GM12878 (cell line): ENCODE measurements at regions of chr20 and their contacts with region 1.

Region 1: DNA sequence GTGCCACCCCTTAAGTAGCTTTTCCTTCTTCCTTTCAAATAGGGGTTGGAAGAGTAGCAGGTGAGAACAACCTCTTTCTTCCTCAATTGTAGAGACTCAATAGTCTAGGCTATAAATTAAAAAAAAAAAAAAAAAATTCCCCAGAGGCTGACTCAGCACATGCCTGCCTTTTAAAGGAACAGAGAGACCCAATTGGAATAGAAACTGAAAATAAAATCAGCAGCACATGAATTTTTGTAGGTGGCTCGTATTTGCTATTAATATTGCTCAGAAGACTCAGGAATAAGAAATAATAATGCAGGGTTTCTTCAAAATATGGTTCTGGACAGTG is 19.3 kb downstream of the TOP1 start:
- DNase-seq: no peak
- ATAC-seq: peak; percentile 69
- H3K4me3 ChIP-seq: peak overlapping the region; percentile 64
- H3K27ac ChIP-seq: peak overlapping the region; percentile 76
- H3K4me1 ChIP-seq: peaks cover 44% of the 10 kb centered on the region
- H3K27me3 ChIP-seq: no peaks in the 10 kb centered on the region
- CTCF ChIP-seq: no peak
- EP300 ChIP-seq: no peak
- POLR2A ChIP-seq: no peak
- RAD21 ChIP-seq: no peak

Region 2: DNA sequence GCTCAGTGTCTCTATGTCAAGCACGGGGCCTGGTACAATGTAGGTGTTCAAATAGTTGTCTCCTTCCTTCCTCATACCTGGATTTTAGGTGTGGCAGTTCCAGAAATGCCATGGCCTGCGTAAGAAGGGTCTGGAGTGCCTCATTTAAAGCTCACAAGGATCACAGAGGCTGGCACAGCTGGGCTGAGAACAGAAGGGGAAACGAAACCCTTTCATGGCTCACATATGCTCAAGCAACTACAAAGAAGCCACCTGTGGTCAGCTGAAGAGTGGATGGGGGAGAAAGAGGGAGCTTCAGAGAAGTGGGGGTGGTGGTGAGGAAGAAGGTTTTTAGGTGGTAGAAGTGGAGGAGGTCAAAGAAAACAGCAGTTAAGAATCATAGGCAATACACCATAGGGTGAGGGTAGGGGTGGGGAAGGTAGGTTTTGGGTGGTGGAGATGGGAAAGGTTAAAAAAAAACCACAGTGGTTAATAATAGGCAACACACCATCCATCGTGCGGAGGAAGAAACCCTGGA is 36.3 kb before region 1 on chr20:
- CTCF ChIA-PET with region 1: interaction called, 6 read pairs
- POLR2A ChIA-PET with region 1: interaction called, 12 read pairs
- RAD21 ChIA-PET with region 1: interaction called, 33 read pairs
- SMC1A ChIA-PET with region 1: interaction called, 43 read pairs
- in situ Hi-C with region 1: no loop called
- intact Hi-C with region 1: no loop called
- DNase-seq: peak; percentile 95
- ATAC-seq: peak; percentile 95
- H3K4me3 ChIP-seq: peak overlapping the region; percentile 38
- H3K27ac ChIP-seq: peak overlapping the region; percentile 91
- H3K4me1 ChIP-seq: peaks cover 44% of the 10 kb centered on the region
- H3K27me3 ChIP-seq: no peaks in the 10 kb centered on the region
- CTCF ChIP-seq: no peak
- EP300 ChIP-seq: peak; percentile 83 to 88
- POLR2A ChIP-seq: no peak
- RAD21 ChIP-seq: peak; percentile 30; the same call in 1 of the 2 replicates

Region 3: GRCh38 chr20:41057999-41058896 is 10.3 kb after region 1 on chr20:
- CTCF ChIA-PET with region 1: interaction called, 53 read pairs
- POLR2A ChIA-PET with region 1: interaction called, 66 read pairs
- RAD21 ChIA-PET with region 1: interaction called, 16 read pairs
- SMC1A ChIA-PET with region 1: interaction called, 86 read pairs
- in situ Hi-C with region 1: no loop called
- intact Hi-C with region 1: no loop called
- DNase-seq: no peak
- ATAC-seq: peak; percentile 76
- H3K4me3 ChIP-seq: no peak overlapping the region
- H3K27ac ChIP-seq: no peak overlapping the region
- H3K4me1 ChIP-seq: peaks cover 8% of the 10 kb centered on the region
- H3K27me3 ChIP-seq: no peaks in the 10 kb centered on the region
- CTCF ChIP-seq: no peak
- EP300 ChIP-seq: no peak
- POLR2A ChIP-seq: no peak
- RAD21 ChIP-seq: no peak

Region 4: DNA sequence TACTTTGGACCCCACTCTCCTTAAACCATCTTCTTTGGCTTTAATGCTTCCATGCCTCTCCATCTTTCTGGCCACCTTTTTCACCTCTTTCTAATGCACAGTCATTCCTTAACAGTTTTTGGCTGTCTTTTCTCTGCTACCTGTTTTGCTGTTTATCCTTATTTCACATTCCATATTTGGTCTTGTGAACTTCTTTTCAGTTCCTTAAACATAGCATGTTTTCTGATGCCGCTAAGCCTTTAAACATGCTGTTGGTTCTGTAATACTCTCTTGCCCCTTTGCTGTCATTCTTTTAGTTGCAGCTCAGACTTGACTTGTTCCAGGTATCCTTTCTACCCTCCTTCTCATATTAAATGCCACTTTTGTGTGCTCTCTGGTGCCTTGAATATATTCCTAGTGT is 16.4 kb after region 1 on chr20:
- CTCF ChIA-PET with region 1: interaction called, 23 read pairs
- POLR2A ChIA-PET with region 1: interaction called, 9 read pairs
- RAD21 ChIA-PET with region 1: interaction called, 16 read pairs
- SMC1A ChIA-PET with region 1: interaction called, 22 read pairs
- in situ Hi-C with region 1: no loop called
- intact Hi-C with region 1: no loop called
- DNase-seq: peak; percentile 68
- ATAC-seq: peak; percentile 93
- H3K4me3 ChIP-seq: no peak overlapping the region
- H3K27ac ChIP-seq: peak overlapping the region; percentile 62
- H3K4me1 ChIP-seq: peaks cover 20% of the 10 kb centered on the region
- H3K27me3 ChIP-seq: no peaks in the 10 kb centered on the region
- CTCF ChIP-seq: peak; percentile 8 to 59 (median 36); a peak in 3 of 6 replicates
- EP300 ChIP-seq: no peak; a peak in 1 of 4 replicates
- POLR2A ChIP-seq: no peak
- RAD21 ChIP-seq: peak; percentile 77

Region 5: DNA sequence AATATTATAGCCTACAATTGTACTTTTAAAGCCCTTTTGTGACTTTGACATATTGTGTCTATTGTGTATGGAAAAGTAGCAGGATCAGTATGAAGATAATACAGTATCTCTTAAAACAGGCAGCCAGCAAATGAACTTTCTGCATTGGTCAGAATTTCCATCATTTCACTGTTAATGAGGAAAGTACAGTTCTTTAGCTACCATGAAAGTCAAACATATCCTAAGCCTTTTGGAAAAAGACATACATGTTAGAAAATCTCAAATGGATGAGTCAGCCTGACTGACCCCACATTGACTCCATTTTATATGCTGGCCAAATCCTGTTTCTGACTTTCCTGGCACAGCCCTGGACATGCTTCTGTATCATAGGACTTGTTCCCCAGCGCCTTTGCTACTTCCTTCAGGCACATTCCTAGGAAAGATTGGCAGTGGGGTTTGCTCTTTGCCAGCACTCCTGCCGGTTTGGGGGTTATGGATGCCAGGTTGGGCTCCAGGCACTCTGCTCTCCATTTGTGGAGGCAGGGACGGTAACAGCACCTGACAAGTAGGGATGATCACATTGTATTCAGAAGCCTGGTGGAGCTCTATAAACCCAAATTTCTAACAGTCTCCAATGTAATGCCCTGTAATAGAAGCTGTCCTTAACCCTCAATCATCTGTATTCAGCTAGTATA is 24.4 kb after region 1 on chr20:
- CTCF ChIA-PET with region 1: interaction called, 3 read pairs
- POLR2A ChIA-PET with region 1: interaction called, 5 read pairs
- RAD21 ChIA-PET with region 1: no interaction called
- SMC1A ChIA-PET with region 1: interaction called, 10 read pairs
- in situ Hi-C with region 1: no loop called
- intact Hi-C with region 1: no loop called
- DNase-seq: no peak
- ATAC-seq: peak; percentile 18; the same call in 2 of the 3 replicates
- H3K4me3 ChIP-seq: no peak overlapping the region
- H3K27ac ChIP-seq: peak overlapping the region; percentile 9; the same call in 1 of the 2 replicates
- H3K4me1 ChIP-seq: peaks cover 15% of the 10 kb centered on the region
- H3K27me3 ChIP-seq: no peaks in the 10 kb centered on the region
- CTCF ChIP-seq: no peak
- EP300 ChIP-seq: no peak
- POLR2A ChIP-seq: no peak
- RAD21 ChIP-seq: no peak